Dorsolateral prefrontal cortex (tissue), 120 donors: ENCODE measurements at regions of chr17 and their contacts with region 1.

Region 1: GRCh38 chr17:79991140-79991923 is 44.3 kb downstream of the TBC1D16 start:
- DNase-seq: peak; percentile 81 to 91 (median 87)
- H3K4me3 ChIP-seq: peak overlapping the region; percentile 45 to 74 (median 65)
- H3K27ac ChIP-seq: peak overlapping the region in 16 of 59 donors; percentile 9 to 77 (median 52)
- H3K27me3 ChIP-seq: no peaks in the 10 kb centered on the region
- CTCF ChIP-seq: peak; percentile 38 to 89 (median 76)

Region 2: GRCh38 chr17:79695797-79696609 is 295.3 kb before region 1 on chr17:
- intact Hi-C with region 1: no loop called
- DNase-seq: peak in 1 of 10 donors; percentile 30
- H3K4me3 ChIP-seq: no peak overlapping the region
- H3K27ac ChIP-seq: no peak overlapping the region
- H3K27me3 ChIP-seq: peaks cover 0 to 16% (median 0%) of the 10 kb centered on the region in 45 donors
- CTCF ChIP-seq: no peak

Region 3: GRCh38 chr17:79741751-79742588 is 249.4 kb before region 1 on chr17:
- intact Hi-C with region 1: loop called (anchors 5 kb)
- DNase-seq: peak; percentile 59 to 87 (median 70)
- H3K4me3 ChIP-seq: peak overlapping the region in 53 of 59 donors; percentile 7 to 61 (median 38)
- H3K27ac ChIP-seq: no peak overlapping the region
- H3K27me3 ChIP-seq: peaks cover 0 to 43% (median 10%) of the 10 kb centered on the region in 45 donors
- CTCF ChIP-seq: peak; percentile 49 to 93 (median 85)

Region 4: DNA sequence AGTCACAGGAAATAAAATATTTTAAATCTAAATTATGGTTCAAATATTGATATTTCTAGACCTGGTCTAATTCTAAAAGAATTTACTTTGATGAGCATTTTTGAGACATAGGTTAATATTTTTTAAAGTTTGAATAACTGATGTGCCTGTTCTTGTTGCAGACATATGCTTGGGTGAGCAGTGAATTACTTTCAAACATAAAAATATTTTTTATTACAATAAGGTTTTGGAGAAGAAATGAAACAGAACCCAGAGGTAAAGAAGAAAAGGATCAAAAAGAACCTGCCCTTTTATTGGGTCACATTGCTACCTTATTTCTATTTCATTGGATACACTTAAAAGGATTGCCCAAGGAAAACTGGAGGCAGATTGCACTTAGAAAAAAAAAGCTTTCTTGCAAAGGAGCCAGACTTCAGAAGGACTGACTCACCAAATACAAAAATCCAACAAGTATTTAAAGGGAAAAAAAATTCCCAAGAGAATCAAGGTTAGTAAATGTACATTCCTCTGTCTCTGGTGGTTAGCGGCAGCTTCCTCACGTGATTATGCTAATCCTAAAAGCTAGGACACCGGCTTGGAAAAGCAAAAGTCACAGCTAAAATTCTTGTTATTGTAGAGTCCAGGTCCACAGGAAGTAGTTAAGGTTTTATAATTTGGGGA is 242.0 kb before region 1 on chr17:
- intact Hi-C with region 1: loop called (anchors 5 kb)
- DNase-seq: no peak
- H3K4me3 ChIP-seq: no peak overlapping the region
- H3K27ac ChIP-seq: no peak overlapping the region
- H3K27me3 ChIP-seq: peaks cover 0 to 75% (median 53%) of the 10 kb centered on the region in 45 donors
- CTCF ChIP-seq: no peak

Region 5: GRCh38 chr17:79789534-79790353 is 201.6 kb before region 1 on chr17:
- intact Hi-C with region 1: loop called (anchors 2 kb)
- DNase-seq: no peak
- H3K4me3 ChIP-seq: peak overlapping the region in 22 of 59 donors; percentile 5 to 42 (median 21)
- H3K27ac ChIP-seq: no peak overlapping the region
- H3K27me3 ChIP-seq: peaks cover 10 to 97% (median 61%) of the 10 kb centered on the region in 45 donors
- CTCF ChIP-seq: peak; percentile 23 to 94 (median 76)

Region 6: DNA sequence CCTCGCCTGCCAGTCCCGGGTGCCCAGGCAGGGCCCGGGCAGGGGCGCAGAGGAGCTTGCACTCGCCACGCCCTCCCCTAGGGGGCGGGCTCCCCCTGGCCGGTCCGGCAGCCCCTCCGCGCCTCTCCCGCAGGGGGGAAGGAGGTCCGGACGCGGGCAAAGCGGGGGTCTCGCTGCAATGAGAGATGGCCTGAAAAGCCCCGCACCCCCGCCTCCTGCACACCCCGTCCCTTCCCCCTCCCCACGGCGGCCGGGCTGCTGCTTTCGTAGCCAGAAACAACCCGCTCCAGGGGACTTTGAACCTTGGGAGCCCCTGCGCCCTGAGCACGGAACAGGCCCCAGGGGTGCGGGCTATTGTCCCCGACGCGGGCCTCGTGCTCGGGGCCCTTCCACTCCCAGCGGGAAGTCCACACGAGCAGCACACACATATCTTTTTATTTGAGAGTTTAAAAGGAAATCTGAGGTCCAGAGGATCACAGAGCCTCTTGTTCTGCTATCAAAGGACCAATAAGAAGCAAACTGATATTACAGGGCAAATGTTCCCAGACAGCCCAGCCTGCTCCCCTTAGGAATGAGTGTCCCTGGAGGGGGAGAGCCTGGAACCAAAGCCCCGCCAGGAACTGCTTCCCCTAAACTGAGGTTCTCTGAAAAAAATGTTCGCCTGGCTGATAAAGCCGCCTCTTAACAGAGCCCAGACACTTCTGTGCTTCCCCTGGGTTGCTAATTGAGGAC is 146.3 kb before region 1 on chr17:
- intact Hi-C with region 1: loop called (anchors 2 kb)
- DNase-seq: peak in 1 of 10 donors; percentile 70
- H3K4me3 ChIP-seq: peak overlapping the region in 58 of 59 donors; percentile 33 to 75 (median 61)
- H3K27ac ChIP-seq: peak overlapping the region in 48 of 59 donors; percentile 5 to 78 (median 48)
- H3K27me3 ChIP-seq: peaks cover 14 to 68% (median 40%) of the 10 kb centered on the region in 45 donors
- CTCF ChIP-seq: peak; percentile 38 to 85 (median 73)

Region 7: GRCh38 chr17:79925242-79925957 is 65.9 kb before region 1 on chr17:
- intact Hi-C with region 1: loop called in 1 of 2 experiments (anchors 5 kb)
- DNase-seq: peak; percentile 29 to 73 (median 66)
- H3K4me3 ChIP-seq: peak overlapping the region in 1 of 59 donors; percentile 8
- H3K27ac ChIP-seq: peak overlapping the region in 52 of 59 donors; percentile 0 to 89 (median 63)
- H3K27me3 ChIP-seq: peaks cover 0 to 23% (median 0%) of the 10 kb centered on the region in 45 donors
- CTCF ChIP-seq: peak in 13 of 56 donors; percentile 7 to 35 (median 15)

Region 8: DNA sequence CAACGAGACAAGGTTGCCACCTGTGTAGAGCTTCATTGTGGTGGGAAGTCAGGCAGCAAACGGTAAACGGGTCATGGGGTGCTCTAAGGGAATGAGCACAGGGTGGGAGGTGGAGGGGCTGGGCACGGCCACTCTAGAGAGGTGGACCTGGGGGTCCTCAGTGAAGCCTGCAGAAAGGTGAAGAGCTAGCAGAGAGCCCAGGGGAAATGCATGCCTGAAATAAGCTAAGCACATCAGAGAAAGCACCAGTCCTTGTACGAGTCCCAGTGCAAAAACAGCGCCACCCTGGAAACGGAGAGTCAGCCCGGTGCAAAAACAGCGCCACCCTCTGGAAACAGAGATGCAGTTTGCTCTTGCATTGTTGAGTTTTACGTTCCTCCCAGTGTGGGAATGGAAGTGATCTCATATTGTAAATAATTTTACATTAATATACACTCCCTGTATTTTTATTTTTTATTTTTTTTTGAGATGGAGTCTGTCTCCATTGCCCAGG is 20.7 kb before region 1 on chr17:
- intact Hi-C with region 1: no loop called
- DNase-seq: peak in 7 of 10 donors; percentile 22 to 74 (median 44)
- H3K4me3 ChIP-seq: no peak overlapping the region
- H3K27ac ChIP-seq: peak overlapping the region in 1 of 59 donors; percentile 13
- H3K27me3 ChIP-seq: no peaks in the 10 kb centered on the region
- CTCF ChIP-seq: peak in 55 of 56 donors; percentile 21 to 91 (median 61)